ENCODE measurements at regions of chr12 and their contacts with region 1.

Region 1: GRCh38 chr12:66409195-66409871 is 107.0 kb downstream of the HELB start:
- DNase-seq: peak; percentile 28
- H3K4me3 ChIP-seq: no peak overlapping the region
- CTCF ChIP-seq: peak; percentile 61

Region 2: DNA sequence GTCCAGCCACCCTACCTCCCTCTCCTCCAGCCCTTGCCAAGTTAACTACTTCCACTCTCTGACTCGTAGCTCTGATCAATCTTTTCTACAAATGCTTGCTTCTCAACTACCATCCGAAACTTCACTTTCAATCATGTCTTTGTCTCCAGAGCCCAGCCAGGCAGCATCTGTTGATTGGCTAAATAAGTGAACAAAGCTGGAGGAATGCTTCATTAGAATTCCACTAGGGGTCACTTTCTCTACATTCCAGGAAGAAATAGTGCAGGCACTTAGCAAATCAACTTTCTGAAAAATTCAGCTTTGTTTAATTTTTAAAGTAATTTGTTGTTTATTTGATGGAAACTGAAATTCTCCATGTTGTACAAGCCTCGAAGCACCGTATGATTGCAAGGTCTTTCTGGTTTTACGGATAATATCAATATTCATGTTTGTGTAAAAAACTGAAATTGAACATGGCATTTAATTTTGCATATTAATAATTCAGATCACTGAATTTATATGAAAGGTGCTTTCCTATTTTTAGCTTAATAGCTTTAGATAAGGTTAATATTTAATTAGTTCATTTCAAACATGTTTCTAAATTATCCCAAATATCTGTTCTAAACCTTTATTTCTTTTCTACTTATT is 139.5 kb before region 1 on chr12:
- CTCF ChIA-PET with region 1: interaction called, 47 read pairs
- POLR2A ChIA-PET with region 1: no interaction called
- DNase-seq: peak; percentile 12
- H3K4me3 ChIP-seq: no peak overlapping the region
- CTCF ChIP-seq: peak; percentile 48

Region 3: GRCh38 chr12:66279123-66279712 is 130.1 kb before region 1 on chr12:
- CTCF ChIA-PET with region 1: interaction called, 31 read pairs
- POLR2A ChIA-PET with region 1: no interaction called
- DNase-seq: no peak
- H3K4me3 ChIP-seq: no peak overlapping the region
- CTCF ChIP-seq: peak; percentile 66

Region 4: GRCh38 chr12:66352197-66352596 is 57.1 kb before region 1 on chr12:
- CTCF ChIA-PET with region 1: interaction called, 27 read pairs
- POLR2A ChIA-PET with region 1: no interaction called
- DNase-seq: no peak
- H3K4me3 ChIP-seq: no peak overlapping the region
- CTCF ChIP-seq: peak; percentile 53

Measured in AG04449 (cell line).